Psoas muscle (tissue), 8 donors: ENCODE measurements at regions of chr7 and their contacts with region 1.

Region 1: DNA sequence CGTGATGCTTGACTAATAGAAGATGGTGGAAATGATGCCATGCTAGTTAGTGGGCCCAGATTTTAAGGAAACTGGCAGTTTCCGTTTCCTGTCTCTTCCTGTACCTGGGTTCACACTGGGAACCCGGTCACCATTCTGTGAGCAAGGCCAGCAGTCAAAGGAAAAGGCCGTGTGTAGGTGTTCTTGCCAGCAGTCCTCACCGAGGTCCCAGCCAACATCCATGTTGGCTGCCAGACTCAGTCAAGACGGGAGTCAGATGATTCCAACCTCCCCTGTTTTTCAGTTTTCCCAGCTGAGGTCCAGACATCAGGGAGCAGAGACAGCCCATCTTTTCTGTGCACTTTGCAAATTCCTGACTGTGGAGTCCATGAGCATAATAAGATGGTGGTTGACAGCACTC is 15.2 kb upstream of the PILRB start:
- DNase-seq: no peak
- ATAC-seq: peak in 3 of 4 donors; percentile 19 to 45 (median 30)
- H3K4me3 ChIP-seq: no peak overlapping the region
- H3K27ac ChIP-seq: peak overlapping the region; percentile 83
- H3K4me1 ChIP-seq: peaks cover 21% of the 10 kb centered on the region
- H3K27me3 ChIP-seq: no peaks in the 10 kb centered on the region
- CTCF ChIP-seq: no peak

Region 2: DNA sequence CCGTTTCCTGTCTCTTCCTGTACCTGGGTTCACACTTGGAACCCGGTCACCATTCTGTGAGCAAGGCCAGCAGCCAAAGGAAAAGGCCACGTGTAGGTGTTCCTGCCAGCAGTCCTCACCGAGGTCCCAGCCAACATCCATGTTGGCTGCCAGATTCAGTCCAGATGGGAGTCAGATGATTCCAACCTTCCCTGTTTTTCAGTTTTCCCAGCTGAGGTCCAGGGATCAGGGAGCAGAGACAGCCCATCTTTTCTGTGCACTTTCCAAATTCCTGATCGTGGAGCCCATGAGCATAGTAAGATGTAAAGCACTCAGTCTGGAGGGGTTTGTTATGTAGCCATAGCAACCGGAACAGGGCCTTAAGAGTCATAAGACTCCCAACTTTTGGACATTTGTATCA is 126.9 kb before region 1 on chr7:
- intact Hi-C with region 1: loop called in 1 of 2 experiments (anchors 10 kb)
- DNase-seq: no peak
- ATAC-seq: peak; percentile 15 to 48 (median 44)
- H3K4me3 ChIP-seq: no peak overlapping the region
- H3K27ac ChIP-seq: peak overlapping the region; percentile 50
- H3K4me1 ChIP-seq: peaks cover 8% of the 10 kb centered on the region
- H3K27me3 ChIP-seq: no peaks in the 10 kb centered on the region
- CTCF ChIP-seq: no peak

Region 3: DNA sequence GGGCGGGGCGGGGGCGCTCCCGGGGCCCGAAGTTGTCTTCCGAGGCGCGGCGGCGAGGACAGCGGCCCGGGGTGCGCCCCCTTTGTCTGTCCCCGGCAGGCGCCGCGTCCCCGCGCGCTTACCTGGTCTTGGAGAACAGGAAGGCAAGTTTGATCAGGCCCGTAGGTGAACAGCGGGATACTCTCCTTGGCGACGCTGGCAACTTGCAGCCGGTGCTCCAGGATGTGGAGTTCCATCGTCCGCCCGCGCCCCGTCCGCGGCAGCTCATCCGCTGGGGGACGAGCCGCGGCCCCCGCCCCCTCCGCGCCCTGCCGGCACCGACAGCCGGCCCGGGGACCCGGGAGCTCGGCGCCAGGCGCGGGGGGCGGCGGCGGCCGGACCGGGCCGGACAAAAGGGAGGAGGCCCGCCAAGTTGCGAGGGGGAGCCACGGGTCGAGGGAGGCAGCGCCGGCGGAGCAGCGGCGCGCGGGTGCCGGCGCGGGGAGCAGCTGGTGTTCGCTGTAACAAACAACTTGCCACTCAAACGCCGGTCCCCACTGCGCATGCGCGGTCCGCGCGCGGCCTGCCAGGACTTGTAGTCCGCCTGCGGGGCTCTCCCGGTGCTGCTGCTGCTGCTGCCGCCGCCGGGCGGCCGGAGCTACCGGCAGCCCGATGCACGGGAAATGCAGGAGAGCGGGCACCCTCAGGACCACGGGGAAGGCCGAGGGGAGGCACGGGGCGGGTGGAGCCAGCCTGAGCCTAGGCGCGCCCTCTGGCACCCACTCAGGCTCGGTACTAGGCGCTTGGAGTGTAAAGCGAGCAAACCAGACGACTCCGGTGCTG is 70.8 kb before region 1 on chr7:
- intact Hi-C with region 1: loop called in 1 of 2 experiments (anchors 10 kb)
- DNase-seq: peak; percentile 100
- ATAC-seq: peak; percentile 82 to 89 (median 84)
- H3K4me3 ChIP-seq: peak overlapping the region; percentile 78
- H3K27ac ChIP-seq: peak overlapping the region; percentile 91
- H3K4me1 ChIP-seq: peaks cover 21% of the 10 kb centered on the region
- H3K27me3 ChIP-seq: no peaks in the 10 kb centered on the region
- CTCF ChIP-seq: peak; percentile 32

Region 4: GRCh38 chr7:100396421-100396982 is 53.7 kb after region 1 on chr7:
- intact Hi-C with region 1: no loop called
- DNase-seq: no peak
- ATAC-seq: no peak
- H3K4me3 ChIP-seq: no peak overlapping the region
- H3K27ac ChIP-seq: no peak overlapping the region
- H3K4me1 ChIP-seq: no peaks in the 10 kb centered on the region
- H3K27me3 ChIP-seq: no peaks in the 10 kb centered on the region
- CTCF ChIP-seq: no peak

Region 5: DNA sequence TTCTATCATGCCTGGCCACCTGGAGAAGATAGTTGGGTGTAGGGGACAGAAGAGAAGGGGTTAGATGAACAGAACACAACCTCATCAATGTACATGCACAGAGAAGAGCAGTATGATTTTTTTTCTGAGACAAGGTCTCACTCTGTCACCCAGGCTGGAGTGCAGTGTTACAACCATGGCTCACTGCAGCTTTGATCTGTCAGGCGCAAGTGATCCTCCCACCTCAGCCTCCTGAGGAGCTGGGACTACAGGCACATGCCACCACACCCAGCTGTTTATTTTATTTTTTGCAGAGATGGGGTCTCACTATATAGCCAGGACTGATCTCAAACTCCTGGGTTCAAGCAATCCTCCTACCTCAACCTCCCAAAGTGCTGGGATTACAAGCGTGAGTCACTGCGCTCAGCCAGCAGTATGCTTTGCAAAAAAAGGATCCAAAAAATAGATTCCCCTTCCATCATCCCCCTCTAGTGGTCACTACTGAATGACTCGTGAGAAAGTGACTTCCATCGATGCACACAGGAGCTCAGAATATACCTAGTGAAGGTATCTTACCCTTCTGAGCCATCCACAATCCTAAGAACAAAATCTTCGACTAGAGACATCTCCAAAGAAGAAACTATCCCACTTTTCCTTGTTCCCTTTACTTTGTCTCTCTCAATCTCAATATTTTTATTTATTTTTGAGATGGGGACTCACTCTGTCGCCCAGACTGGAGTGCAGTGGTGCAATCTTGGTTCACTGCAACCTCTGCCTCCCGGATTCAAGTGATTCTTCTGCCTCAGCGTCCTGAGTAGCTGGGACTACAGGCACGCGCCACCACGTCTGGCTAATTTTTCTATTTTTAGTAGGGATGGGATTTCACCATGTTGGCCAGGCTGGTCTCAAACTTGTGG is 64.8 kb after region 1 on chr7:
- intact Hi-C with region 1: loop called in 1 of 2 experiments (anchors 2 kb)
- DNase-seq: no peak
- ATAC-seq: peak; percentile 51 to 73 (median 56)
- H3K4me3 ChIP-seq: no peak overlapping the region
- H3K27ac ChIP-seq: no peak overlapping the region
- H3K4me1 ChIP-seq: no peaks in the 10 kb centered on the region
- H3K27me3 ChIP-seq: no peaks in the 10 kb centered on the region
- CTCF ChIP-seq: peak; percentile 41

Region 6: GRCh38 chr7:100469227-100470044 is 126.7 kb after region 1 on chr7:
- intact Hi-C with region 1: no loop called
- DNase-seq: peak; percentile 88 to 94
- ATAC-seq: peak; percentile 84 to 87 (median 86)
- H3K4me3 ChIP-seq: no peak overlapping the region
- H3K27ac ChIP-seq: no peak overlapping the region
- H3K4me1 ChIP-seq: peaks cover 11% of the 10 kb centered on the region
- H3K27me3 ChIP-seq: no peaks in the 10 kb centered on the region
- CTCF ChIP-seq: peak; percentile 92